ENCODE measurements at regions of chr1 and their contacts with region 1.

Region 1: GRCh38 chr1:96721416-96722160 is at the start of gene PTBP2:
- DNase-seq: peak; percentile 71
- H3K4me3 ChIP-seq: peak within 1 kb of the TSS; percentile 82 to 98 (median 91)
- H3K27ac ChIP-seq: peak within 1 kb of the TSS; percentile 60
- H3K4me1 ChIP-seq: no peaks in the 10 kb centered on the region
- H3K27me3 ChIP-seq: no peaks in the 10 kb centered on the region
- CTCF ChIP-seq: no peak
- total RNA-seq, gene PTBP2: 13.0 to 13.6 TPM

Region 2: GRCh38 chr1:96559707-96560596 is 161.6 kb before region 1 on chr1:
- CTCF ChIA-PET with region 1: no interaction called
- dilution Hi-C with region 1: no loop called
- in situ Hi-C with region 1: no loop called
- intact Hi-C with region 1: loop called (anchors 10 kb)
- DNase-seq: peak; percentile 99
- H3K4me3 ChIP-seq: no peak overlapping the region
- H3K27ac ChIP-seq: peak overlapping the region; percentile 88
- H3K4me1 ChIP-seq: peaks cover 17% of the 10 kb centered on the region
- H3K27me3 ChIP-seq: no peaks in the 10 kb centered on the region
- CTCF ChIP-seq: no peak

Region 3: DNA sequence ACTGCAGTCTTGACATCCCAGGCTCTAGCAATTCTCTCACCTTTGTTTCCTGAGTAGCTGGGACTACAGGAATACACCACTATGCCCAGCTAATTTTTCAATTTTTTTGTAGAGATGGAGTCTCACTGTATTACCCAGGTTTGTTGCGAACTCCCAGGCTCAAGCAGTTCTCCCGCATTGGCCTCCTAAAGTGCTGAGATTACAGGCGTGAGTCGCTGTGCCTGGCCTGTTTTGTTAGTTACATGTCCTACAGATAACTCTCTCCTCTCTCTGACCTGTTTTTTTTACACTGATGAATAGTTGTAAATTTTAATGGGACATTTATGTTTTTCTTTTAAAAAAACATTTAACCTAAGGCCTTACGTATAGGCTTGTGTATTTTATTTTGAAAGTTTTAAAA is 19.7 kb after region 1 on chr1:
- CTCF ChIA-PET with region 1: no interaction called
- dilution Hi-C with region 1: no loop called
- in situ Hi-C with region 1: no loop called
- intact Hi-C with region 1: no loop called
- DNase-seq: no peak
- H3K4me3 ChIP-seq: no peak overlapping the region
- H3K27ac ChIP-seq: no peak overlapping the region
- H3K4me1 ChIP-seq: no peaks in the 10 kb centered on the region
- H3K27me3 ChIP-seq: no peaks in the 10 kb centered on the region
- CTCF ChIP-seq: no peak

Region 4: GRCh38 chr1:96845464-96845863 is 123.9 kb after region 1 on chr1:
- CTCF ChIA-PET with region 1: no interaction called
- dilution Hi-C with region 1: no loop called
- in situ Hi-C with region 1: no loop called
- intact Hi-C with region 1: no loop called
- DNase-seq: peak; percentile 12
- H3K4me3 ChIP-seq: no peak overlapping the region
- H3K27ac ChIP-seq: no peak overlapping the region
- H3K4me1 ChIP-seq: no peaks in the 10 kb centered on the region
- H3K27me3 ChIP-seq: no peaks in the 10 kb centered on the region
- CTCF ChIP-seq: peak; percentile 64 to 71

Region 5: GRCh38 chr1:96865731-96866685 is 144.4 kb after region 1 on chr1:
- CTCF ChIA-PET with region 1: no interaction called
- dilution Hi-C with region 1: no loop called
- in situ Hi-C with region 1: no loop called
- intact Hi-C with region 1: no loop called
- DNase-seq: peak; percentile 79
- H3K4me3 ChIP-seq: no peak overlapping the region
- H3K27ac ChIP-seq: peak overlapping the region; percentile 50
- H3K4me1 ChIP-seq: peaks cover 3% of the 10 kb centered on the region
- H3K27me3 ChIP-seq: no peaks in the 10 kb centered on the region
- CTCF ChIP-seq: no peak

Region 6: GRCh38 chr1:97063530-97063929 is 341.9 kb after region 1 on chr1:
- CTCF ChIA-PET with region 1: no interaction called
- dilution Hi-C with region 1: no loop called
- in situ Hi-C with region 1: no loop called
- intact Hi-C with region 1: no loop called
- DNase-seq: no peak
- H3K4me3 ChIP-seq: no peak overlapping the region
- H3K27ac ChIP-seq: no peak overlapping the region
- H3K4me1 ChIP-seq: peaks cover 26% of the 10 kb centered on the region
- H3K27me3 ChIP-seq: no peaks in the 10 kb centered on the region
- CTCF ChIP-seq: no peak

Measured in mammary epithelial cell (primary cell).